ENCODE measurements at regions of chr2 and their contacts with region 1.

Region 1: DNA sequence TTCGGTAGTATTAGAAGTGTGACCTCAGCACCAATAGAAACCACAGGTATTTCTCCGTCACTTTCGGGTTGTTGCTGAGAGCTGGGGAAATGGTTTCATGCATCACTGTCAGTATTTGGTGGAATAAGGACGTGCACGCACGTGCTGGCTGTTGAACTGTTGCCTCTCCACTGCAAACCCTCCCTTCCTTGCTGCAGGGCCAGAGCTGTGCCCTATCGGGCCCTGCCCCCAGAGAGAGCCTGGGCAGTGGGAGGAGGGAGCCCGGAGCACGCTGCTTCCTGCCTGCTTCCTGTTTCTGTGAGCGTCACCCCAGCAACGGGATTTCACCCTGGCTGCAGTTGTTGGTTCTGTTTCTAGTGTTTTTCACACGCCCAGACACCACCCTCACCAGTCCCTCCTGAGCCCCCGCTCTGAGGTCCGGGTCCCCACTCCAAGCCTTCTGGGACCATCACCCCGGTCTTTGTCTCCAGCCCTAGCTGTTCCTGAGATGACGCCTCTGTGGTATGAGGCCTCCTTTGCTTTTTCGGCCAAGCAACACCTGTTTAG is 47.4 kb downstream of the LRRFIP1 start:
- DNase-seq: peak; percentile 91
- H3K4me3 Mint-ChIP-seq: peak overlapping the region; percentile 77
- H3K27ac Mint-ChIP-seq: peak overlapping the region; percentile 93
- H3K4me1 Mint-ChIP-seq: peaks cover 49% of the 10 kb centered on the region
- H3K27me3 Mint-ChIP-seq: peaks cover 12% of the 10 kb centered on the region

Region 2: GRCh38 chr2:237581751-237582746 is 92.8 kb before region 1 on chr2:
- CTCF ChIA-PET with region 1: interaction called, 28 read pairs
- DNase-seq: peak; percentile 67
- H3K4me3 Mint-ChIP-seq: no peak overlapping the region
- H3K27ac Mint-ChIP-seq: no peak overlapping the region
- H3K4me1 Mint-ChIP-seq: peaks cover 6% of the 10 kb centered on the region
- H3K27me3 Mint-ChIP-seq: peaks cover 13% of the 10 kb centered on the region

Region 3: GRCh38 chr2:237691908-237692600 is 17.2 kb after region 1 on chr2:
- CTCF ChIA-PET with region 1: interaction called, 157 read pairs
- DNase-seq: peak; percentile 95
- H3K4me3 Mint-ChIP-seq: peak overlapping the region; percentile 98
- H3K27ac Mint-ChIP-seq: peak overlapping the region; percentile 93
- H3K4me1 Mint-ChIP-seq: peaks cover 63% of the 10 kb centered on the region
- H3K27me3 Mint-ChIP-seq: peaks cover 4% of the 10 kb centered on the region

Region 4: DNA sequence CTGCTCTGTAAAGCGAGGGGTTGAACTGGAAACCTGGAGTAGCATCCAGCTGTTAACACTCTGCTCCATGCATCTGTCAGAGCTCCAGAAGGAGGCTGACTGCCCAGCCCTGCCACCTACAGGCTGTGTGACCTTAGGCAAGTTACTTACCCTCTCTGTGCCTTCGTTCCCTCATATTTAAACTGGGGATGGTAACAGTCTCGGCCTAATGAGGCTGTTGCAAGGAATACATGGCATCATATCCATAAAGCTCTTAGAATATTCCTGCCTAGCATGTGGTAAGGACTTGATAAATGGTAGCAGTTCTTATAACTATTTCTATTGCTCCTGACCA is 33.2 kb after region 1 on chr2:
- CTCF ChIA-PET with region 1: interaction called, 27 read pairs
- DNase-seq: peak; percentile 41
- H3K4me3 Mint-ChIP-seq: no peak overlapping the region
- H3K27ac Mint-ChIP-seq: no peak overlapping the region
- H3K4me1 Mint-ChIP-seq: peaks cover 53% of the 10 kb centered on the region
- H3K27me3 Mint-ChIP-seq: no peaks in the 10 kb centered on the region

Region 5: GRCh38 chr2:237744613-237745249 is 69.9 kb after region 1 on chr2:
- CTCF ChIA-PET with region 1: interaction called, 181 read pairs
- DNase-seq: peak; percentile 80
- H3K4me3 Mint-ChIP-seq: no peak overlapping the region
- H3K27ac Mint-ChIP-seq: peak overlapping the region; percentile 54
- H3K4me1 Mint-ChIP-seq: peaks cover 22% of the 10 kb centered on the region
- H3K27me3 Mint-ChIP-seq: no peaks in the 10 kb centered on the region

Region 6: GRCh38 chr2:237774802-237775553 is 100.2 kb after region 1 on chr2:
- CTCF ChIA-PET with region 1: interaction called, 19 read pairs
- DNase-seq: peak; percentile 61
- H3K4me3 Mint-ChIP-seq: no peak overlapping the region
- H3K27ac Mint-ChIP-seq: peak overlapping the region; percentile 78
- H3K4me1 Mint-ChIP-seq: no peaks in the 10 kb centered on the region
- H3K27me3 Mint-ChIP-seq: no peaks in the 10 kb centered on the region

Region 7: DNA sequence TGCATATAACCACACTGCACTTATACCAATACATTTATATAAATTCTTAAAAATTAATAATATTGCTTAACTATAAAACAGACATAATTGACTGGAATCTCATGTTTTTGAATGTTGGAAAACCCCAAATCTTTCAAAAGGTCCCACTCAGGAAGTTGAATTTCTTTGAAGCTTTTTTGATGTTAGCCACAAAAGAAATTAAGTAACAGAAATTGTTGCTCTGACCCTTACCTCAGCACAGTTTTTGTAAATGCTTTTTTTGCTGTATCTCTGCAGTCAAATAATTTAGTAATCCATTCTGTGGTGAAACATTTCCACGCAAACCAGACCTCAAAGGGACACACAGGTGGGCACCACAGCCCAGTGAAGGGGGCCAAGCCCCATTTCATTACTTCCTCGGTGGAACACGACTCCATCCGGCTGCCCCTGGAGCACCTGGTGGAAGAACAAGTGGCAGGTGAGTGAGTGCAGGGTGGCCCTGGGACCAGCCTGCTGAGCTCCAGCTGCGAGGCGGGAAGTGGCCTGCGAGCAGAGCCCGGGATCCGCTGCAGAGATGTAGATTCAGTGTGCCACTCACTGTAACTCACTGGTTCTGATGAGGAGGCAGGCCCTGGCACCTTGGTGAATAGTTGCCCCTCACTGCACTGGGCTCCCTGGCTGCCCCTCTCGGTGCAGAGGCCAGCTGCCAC is 394.4 kb after region 1 on chr2:
- CTCF ChIA-PET with region 1: no interaction called
- DNase-seq: no peak
- H3K4me3 Mint-ChIP-seq: peak overlapping the region; percentile 40
- H3K27ac Mint-ChIP-seq: peak overlapping the region; percentile 86
- H3K4me1 Mint-ChIP-seq: peaks cover 47% of the 10 kb centered on the region
- H3K27me3 Mint-ChIP-seq: no peaks in the 10 kb centered on the region